ENCODE measurements at regions of chr16 and their contacts with region 1.

Region 1: GRCh38 chr16:19613834-19614233 is 58.3 kb downstream of the VPS35L start:
- DNase-seq: no peak
- ATAC-seq: no peak
- H3K4me3 ChIP-seq: no peak overlapping the region
- H3K27ac ChIP-seq: no peak overlapping the region
- H3K4me1 ChIP-seq: peaks cover 8% of the 10 kb centered on the region
- CTCF ChIP-seq: no peak
- EP300 ChIP-seq: no peak
- POLR2A ChIP-seq: no peak
- RAD21 ChIP-seq: no peak

Region 2: GRCh38 chr16:19601083-19601976 is 12.5 kb before region 1 on chr16:
- CTCF ChIA-PET with region 1: interaction called, 18 read pairs
- POLR2A ChIA-PET with region 1: no interaction called
- DNase-seq: peak; percentile 41 to 42
- ATAC-seq: peak; percentile 56 to 58; a peak in 4 of 6 replicates
- H3K4me3 ChIP-seq: no peak overlapping the region
- H3K27ac ChIP-seq: peak overlapping the region in 1 of 2 experiments; percentile 43; a peak in 3 of 6 replicates
- H3K4me1 ChIP-seq: peaks cover 14% of the 10 kb centered on the region
- CTCF ChIP-seq: peak; percentile 88
- EP300 ChIP-seq: no peak
- POLR2A ChIP-seq: no peak
- RAD21 ChIP-seq: peak; percentile 89 to 92